Activated B cell treated with CpG ODN at 0.5 μM for 24 hours (primary cell): ENCODE measurements at regions of chr22 and their contacts with region 1.

Region 1: DNA sequence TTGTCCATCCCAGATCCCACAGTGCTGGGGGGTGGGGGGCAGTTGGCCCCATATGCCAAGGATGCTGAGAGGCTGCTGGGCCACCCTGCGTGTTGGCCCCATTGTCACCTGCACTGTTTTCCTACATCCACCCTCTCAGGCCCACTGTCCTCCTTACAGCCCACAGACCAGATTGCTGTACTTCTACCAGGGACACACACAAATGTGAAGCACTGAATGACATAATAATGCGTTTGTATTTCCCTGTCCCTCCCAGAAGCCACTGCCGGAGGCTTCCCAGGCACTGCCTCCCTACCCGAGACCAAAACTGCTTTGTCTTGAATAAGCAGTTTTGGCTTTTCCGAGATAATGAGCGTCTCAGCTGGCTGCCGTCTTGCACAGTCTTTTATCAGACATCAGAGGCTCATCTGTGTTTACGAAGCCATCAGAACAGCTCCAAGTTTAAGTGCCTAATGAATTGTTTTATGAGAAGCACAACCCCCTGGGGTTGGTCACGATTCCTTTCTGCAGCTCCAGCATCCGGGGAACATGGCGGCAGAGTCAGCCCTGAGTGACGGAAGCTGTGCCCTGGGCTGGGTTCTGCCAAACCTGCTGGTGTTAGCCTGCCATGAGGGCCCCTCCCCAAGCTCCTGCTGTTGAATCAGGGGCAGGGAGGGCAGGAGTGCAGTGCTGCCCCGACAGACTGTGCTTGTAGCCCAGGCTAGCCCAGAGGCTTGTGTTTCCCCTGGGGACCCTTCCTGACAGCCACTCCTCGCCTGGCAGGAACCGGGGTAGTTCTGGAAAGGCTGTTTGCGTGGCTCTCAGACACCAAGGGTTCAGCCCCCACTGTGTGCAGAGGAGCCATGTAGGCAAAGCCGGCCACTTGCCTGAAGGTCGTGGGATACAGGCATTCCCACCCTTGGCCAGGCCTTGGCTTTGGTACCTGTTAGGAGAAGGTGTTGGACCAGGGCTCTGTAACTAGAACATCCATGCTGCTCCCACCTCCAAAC is 96.2 kb downstream of the MORC2 start:
- DNase-seq: no peak
- ATAC-seq: no peak
- H3K4me3 Mint-ChIP-seq: no peak overlapping the region
- H3K27ac Mint-ChIP-seq: no peak overlapping the region
- H3K4me1 Mint-ChIP-seq: no peaks in the 10 kb centered on the region
- H3K27me3 Mint-ChIP-seq: no peaks in the 10 kb centered on the region
- CTCF ChIP-seq: no peak

Region 2: DNA sequence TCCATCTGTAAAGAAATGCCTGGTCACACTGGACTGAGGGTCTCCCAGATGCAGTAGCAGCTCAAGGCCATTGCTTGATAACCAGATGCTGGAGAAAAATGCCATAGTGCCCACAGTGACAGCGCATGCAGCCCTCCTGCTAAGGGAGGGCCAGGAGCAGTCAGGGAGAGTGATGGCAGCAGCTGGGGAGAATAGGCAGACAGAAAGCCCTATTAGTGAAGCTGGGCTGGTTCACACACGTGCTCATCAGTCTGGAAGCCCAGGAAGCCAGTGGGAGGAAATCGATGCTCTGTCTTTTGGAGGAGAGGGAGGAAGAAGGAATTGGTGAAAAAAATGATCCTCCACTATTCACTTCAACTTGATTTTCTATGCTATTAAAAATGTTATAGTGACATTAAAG is 94.8 kb before region 1 on chr22:
- CTCF ChIA-PET with region 1: no interaction called
- POLR2A ChIA-PET with region 1: no interaction called
- intact Hi-C with region 1: no loop called
- DNase-seq: no peak
- ATAC-seq: no peak
- H3K4me3 Mint-ChIP-seq: no peak overlapping the region
- H3K27ac Mint-ChIP-seq: no peak overlapping the region
- H3K4me1 Mint-ChIP-seq: no peaks in the 10 kb centered on the region
- H3K27me3 Mint-ChIP-seq: peaks cover 10% of the 10 kb centered on the region
- CTCF ChIP-seq: no peak

Region 3: GRCh38 chr22:31005535-31005934 is 133.2 kb after region 1 on chr22:
- CTCF ChIA-PET with region 1: no interaction called
- POLR2A ChIA-PET with region 1: interaction called, 11 read pairs
- intact Hi-C with region 1: no loop called
- DNase-seq: no peak
- ATAC-seq: no peak
- H3K4me3 Mint-ChIP-seq: no peak overlapping the region
- H3K27ac Mint-ChIP-seq: no peak overlapping the region
- H3K4me1 Mint-ChIP-seq: no peaks in the 10 kb centered on the region
- H3K27me3 Mint-ChIP-seq: peaks cover 15% of the 10 kb centered on the region
- CTCF ChIP-seq: no peak